Activated CD4-positive, alpha-beta T cell treated with anti-CD3 and anti-CD28 coated beads for 36 hours (primary cell): ENCODE measurements at regions of chr3 and their contacts with region 1.

Region 1: GRCh38 chr3:152524198-152525140 is 255.7 kb downstream of the MBNL1 start:
- DNase-seq: peak; percentile 63
- ATAC-seq: peak; percentile 58
- H3K4me3 Mint-ChIP-seq: no peak overlapping the region
- H3K27ac Mint-ChIP-seq: no peak overlapping the region
- H3K4me1 Mint-ChIP-seq: no peaks in the 10 kb centered on the region
- H3K27me3 Mint-ChIP-seq: no peaks in the 10 kb centered on the region

Region 2: DNA sequence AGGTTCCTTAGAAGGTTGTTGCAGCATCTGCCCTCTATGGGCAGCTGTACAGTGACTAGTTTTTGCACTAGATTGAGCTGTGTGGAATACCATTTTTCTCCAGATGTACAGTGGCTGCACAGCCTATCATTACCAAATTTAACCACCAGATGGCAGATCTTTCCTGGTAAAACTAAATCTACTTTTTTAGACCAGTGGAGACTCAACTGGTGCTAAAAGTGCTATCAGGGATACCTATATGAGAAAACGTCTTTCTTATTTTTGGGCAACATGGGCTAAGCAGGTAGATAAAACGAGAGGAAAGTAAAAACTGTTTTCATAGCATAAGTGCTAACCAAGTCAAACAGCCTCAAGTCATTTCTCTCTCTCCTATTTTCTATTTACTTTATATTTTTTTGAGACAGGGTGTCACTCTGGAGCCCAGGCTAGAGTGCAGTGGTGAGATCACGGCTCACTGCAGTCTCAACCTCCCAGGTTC is 1084.8 kb before region 1 on chr3:
- CTCF ChIA-PET with region 1: no interaction called
- POLR2A ChIA-PET with region 1: no interaction called
- intact Hi-C with region 1: loop called in 1 of 2 experiments (anchors 5 kb)
- DNase-seq: no peak
- ATAC-seq: peak; percentile 58
- H3K4me3 Mint-ChIP-seq: no peak overlapping the region
- H3K27ac Mint-ChIP-seq: no peak overlapping the region
- H3K4me1 Mint-ChIP-seq: no peaks in the 10 kb centered on the region
- H3K27me3 Mint-ChIP-seq: no peaks in the 10 kb centered on the region

Region 3: DNA sequence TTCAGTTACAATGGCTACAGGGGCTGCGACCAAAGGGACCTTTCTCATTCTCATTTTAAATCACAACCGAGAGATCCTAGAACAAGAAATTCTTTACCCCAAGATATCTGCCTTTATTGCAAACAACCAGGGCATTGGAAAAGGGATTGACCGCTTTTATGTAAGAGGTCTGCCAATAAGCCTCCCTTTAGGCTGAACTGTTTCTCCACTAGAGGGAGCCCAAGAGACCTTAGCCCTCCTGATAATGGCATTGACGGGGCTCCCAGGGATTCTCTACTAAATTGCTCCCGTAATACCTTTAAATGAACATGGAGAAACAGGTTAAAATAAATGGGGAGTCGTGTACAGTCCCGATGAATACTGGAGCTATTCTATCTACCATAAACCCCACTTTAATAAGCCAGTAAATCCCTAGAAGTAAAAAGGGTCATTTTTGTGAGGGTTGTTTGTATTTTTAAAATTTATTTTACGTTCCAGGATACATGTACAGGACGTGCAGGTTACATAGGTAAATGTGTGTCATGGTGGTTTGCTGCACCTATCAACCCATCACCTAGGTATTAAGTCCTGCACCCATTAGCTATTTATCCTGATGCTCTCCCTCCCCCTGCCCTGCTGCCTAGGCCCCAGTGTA is 1056.1 kb before region 1 on chr3:
- CTCF ChIA-PET with region 1: no interaction called
- POLR2A ChIA-PET with region 1: no interaction called
- intact Hi-C with region 1: loop called in 1 of 2 experiments (anchors 1 kb)
- DNase-seq: peak; percentile 46
- ATAC-seq: peak; percentile 70
- H3K4me3 Mint-ChIP-seq: no peak overlapping the region
- H3K27ac Mint-ChIP-seq: no peak overlapping the region
- H3K4me1 Mint-ChIP-seq: no peaks in the 10 kb centered on the region
- H3K27me3 Mint-ChIP-seq: peaks cover 2% of the 10 kb centered on the region

Region 4: GRCh38 chr3:151501923-151502632 is 1022.4 kb before region 1 on chr3:
- CTCF ChIA-PET with region 1: no interaction called
- POLR2A ChIA-PET with region 1: no interaction called
- intact Hi-C with region 1: no loop called
- DNase-seq: no peak
- ATAC-seq: no peak
- H3K4me3 Mint-ChIP-seq: no peak overlapping the region
- H3K27ac Mint-ChIP-seq: no peak overlapping the region
- H3K4me1 Mint-ChIP-seq: no peaks in the 10 kb centered on the region
- H3K27me3 Mint-ChIP-seq: no peaks in the 10 kb centered on the region

Region 5: GRCh38 chr3:152071924-152072323 is 452.5 kb before region 1 on chr3:
- CTCF ChIA-PET with region 1: interaction called, 11 read pairs
- POLR2A ChIA-PET with region 1: no interaction called
- intact Hi-C with region 1: loop called (anchors 1 to 5 kb)
- DNase-seq: peak; percentile 14
- ATAC-seq: peak; percentile 87
- H3K4me3 Mint-ChIP-seq: no peak overlapping the region
- H3K27ac Mint-ChIP-seq: no peak overlapping the region
- H3K4me1 Mint-ChIP-seq: peaks cover 2% of the 10 kb centered on the region
- H3K27me3 Mint-ChIP-seq: no peaks in the 10 kb centered on the region